ENCODE measurements at regions of chr5 and their contacts with region 1.

Region 1: GRCh38 chr5:108567429-108567828 is 180.3 kb upstream of the FER start:
- DNase-seq: no peak
- H3K4me3 ChIP-seq: no peak overlapping the region
- H3K27ac ChIP-seq: no peak overlapping the region
- H3K4me1 ChIP-seq: no peaks in the 10 kb centered on the region
- CTCF ChIP-seq: no peak

Region 2: GRCh38 chr5:108295578-108296368 is 271.7 kb before region 1 on chr5:
- CTCF ChIA-PET with region 1: no interaction called
- POLR2A ChIA-PET with region 1: no interaction called
- intact Hi-C with region 1: no loop called
- DNase-seq: no peak
- H3K4me3 ChIP-seq: no peak overlapping the region
- H3K27ac ChIP-seq: no peak overlapping the region
- H3K4me1 ChIP-seq: no peaks in the 10 kb centered on the region
- CTCF ChIP-seq: no peak

Region 3: DNA sequence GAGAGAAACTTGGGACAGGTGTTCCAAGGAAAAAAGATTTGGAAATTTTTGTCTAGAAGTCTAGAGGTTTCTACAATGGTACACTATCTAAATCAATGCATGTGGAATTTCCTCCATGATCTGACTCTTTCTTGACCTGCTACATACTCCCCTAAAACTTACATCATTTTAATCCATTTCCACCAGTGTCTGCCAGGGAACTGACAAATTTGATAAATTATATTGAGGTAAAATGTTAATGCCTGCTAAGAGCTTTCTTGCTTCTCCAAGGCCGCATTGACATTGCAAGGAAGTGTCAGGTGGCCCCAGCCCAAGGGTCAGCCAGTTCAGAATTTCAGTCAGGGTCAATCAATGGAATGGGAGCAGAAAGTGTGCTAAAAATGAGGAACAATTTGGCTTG is 22.1 kb before region 1 on chr5:
- CTCF ChIA-PET with region 1: no interaction called
- POLR2A ChIA-PET with region 1: no interaction called
- intact Hi-C with region 1: loop called (anchors 2 kb)
- DNase-seq: no peak
- H3K4me3 ChIP-seq: no peak overlapping the region
- H3K27ac ChIP-seq: no peak overlapping the region
- H3K4me1 ChIP-seq: no peaks in the 10 kb centered on the region
- CTCF ChIP-seq: no peak

Region 4: DNA sequence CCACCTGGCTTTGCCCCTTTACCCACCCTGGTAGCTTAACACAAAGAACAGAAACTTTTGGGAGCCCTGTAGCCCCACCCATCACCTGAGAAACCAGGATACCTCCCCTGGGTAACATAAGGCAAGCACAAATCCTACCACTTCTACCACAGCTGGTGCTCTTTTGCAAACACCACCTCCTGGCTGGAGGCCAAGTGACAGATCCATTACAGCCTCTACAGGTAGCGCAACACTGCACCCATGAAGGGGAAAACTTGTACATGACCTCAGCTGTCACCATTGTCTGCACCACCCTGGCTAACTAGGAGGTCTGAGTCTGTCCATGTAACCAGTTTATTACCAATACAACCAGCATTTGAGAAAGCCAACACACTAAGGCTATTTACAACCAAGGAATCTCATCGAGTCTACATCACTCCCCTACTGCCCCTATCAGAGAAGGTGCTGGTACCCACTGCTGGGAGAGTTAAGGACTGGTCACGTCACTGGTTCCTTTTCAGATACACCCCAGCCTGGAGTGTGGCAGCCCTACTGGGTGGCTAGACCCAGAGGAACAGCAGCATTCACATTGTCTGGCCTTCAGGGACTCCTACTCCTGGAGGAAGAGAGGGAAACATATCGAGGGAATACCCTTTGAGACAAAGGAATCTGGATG is 713.8 kb after region 1 on chr5:
- CTCF ChIA-PET with region 1: no interaction called
- POLR2A ChIA-PET with region 1: no interaction called
- intact Hi-C with region 1: no loop called
- DNase-seq: no peak
- H3K4me3 ChIP-seq: no peak overlapping the region
- H3K27ac ChIP-seq: no peak overlapping the region
- H3K4me1 ChIP-seq: no peaks in the 10 kb centered on the region
- CTCF ChIP-seq: no peak

Measured in OCI-LY7 (cell line).